ENCODE measurements at regions of chr1 and their contacts with region 1.

Region 1: GRCh38 chr1:24652382-24652781 is 9.3 kb downstream of the SRRM1 start:
- DNase-seq: no peak
- ATAC-seq: no peak

Region 2: DNA sequence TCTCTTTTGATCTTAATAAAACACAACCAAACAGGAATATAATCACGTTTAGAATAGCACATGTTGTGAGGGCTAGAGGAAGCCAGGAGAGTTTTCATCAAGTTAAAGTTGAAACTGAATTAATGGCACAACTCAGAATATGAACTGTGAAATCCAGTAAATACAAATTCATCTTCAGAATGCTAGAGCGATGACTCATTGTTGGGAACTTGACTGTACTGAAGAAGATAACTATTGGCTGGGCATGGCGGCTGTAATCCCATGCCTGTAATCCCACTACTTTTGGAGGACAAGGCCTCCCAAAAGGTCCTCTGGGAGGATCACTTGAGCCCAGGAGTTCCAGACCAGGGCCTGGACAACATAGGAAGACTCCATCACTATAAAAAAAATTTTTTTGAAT is 571.1 kb after region 1 on chr1:
- intact Hi-C with region 1: loop called in 1 of 2 experiments (anchors 5 kb)
- DNase-seq: no peak
- ATAC-seq: no peak

Measured in left colon (tissue), 2 donors.